ENCODE measurements at regions of chr17 and their contacts with region 1.

Region 1: DNA sequence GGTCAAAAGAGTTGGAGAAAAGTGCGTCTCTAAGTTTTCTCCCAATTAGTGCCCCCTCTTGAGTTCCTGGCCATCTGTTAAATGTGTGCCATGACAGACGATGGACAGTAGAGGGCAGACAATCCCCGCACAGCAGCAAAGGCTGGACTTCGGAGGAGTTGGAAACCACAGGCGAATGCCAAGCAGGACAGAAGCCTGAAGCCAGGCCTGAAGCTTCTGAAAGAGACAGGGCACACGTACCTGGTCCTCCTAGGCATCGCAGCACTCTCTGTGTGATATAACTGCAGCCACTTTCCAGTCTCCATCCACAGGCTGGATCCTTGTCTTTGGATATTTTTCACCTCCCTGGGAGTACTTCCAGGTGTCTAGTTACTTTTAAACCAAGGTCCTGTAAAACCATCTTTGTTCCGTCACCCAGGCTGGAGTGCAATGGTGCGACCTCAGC is 14.5 kb downstream of the C17orf100 start:
- DNase-seq: peak; percentile 78
- CTCF ChIP-seq: peak; percentile 95

Region 2: GRCh38 chr17:6753006-6753445 is 86.9 kb after region 1 on chr17:
- in situ Hi-C with region 1: no loop called
- DNase-seq: peak; percentile 44
- CTCF ChIP-seq: no peak

Region 3: GRCh38 chr17:6872137-6872808 is 206.2 kb after region 1 on chr17:
- in situ Hi-C with region 1: no loop called
- DNase-seq: no peak
- CTCF ChIP-seq: no peak

Region 4: DNA sequence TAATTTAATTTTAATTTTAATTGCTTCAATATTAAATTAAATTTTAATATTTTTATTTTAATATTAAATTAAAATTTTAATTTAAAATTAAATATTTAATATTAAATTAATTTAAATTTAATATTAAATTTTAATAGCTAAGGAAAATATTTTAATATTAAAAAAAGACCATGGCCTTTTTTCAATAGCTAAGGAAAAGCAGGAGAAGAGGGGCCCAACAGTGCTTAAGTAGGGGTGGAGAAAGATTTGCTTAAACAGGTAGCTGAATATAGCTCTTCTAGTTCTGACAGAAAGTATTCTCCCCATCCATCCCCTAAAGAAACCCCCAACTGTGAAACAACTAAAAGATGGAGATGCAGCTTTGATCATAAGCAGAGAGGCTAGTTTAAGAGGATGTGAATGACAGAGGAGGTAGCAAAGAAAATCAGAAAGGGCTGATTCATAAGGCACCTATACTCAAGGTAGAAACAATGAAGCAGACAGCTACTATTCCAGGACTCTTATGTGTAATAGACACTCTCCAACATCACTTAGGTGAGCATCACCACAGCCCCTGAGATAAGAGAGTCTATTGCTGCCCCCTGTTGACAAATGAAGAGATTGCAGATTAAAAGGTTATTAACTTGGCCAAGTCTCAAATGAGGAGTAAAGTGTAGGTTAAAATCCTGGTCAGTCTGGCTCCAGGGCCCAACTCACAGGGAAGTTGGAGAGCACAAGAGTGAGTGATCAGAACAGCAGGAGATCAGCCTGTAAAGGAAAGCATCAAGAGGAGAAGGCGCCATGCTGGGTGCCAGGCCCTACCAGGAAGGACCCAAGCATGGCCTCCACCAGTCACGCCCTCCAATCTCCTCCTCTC is 338.5 kb after region 1 on chr17:
- in situ Hi-C with region 1: loop called (anchors 10 kb)
- DNase-seq: peak; percentile 75
- CTCF ChIP-seq: peak; percentile 72

Measured in GM13977 (cell line).